Activated CD8-positive, alpha-beta T cell treated with anti-CD3 and anti-CD28 coated beads for 36 hours (primary cell): ENCODE measurements at regions of chr9 and their contacts with region 1.

Region 1: GRCh38 chr9:98074115-98074990 is 17.8 kb downstream of the NANS start:
- DNase-seq: peak; percentile 72
- ATAC-seq: peak; percentile 32
- H3K4me3 Mint-ChIP-seq: peak overlapping the region; percentile 31
- H3K27ac Mint-ChIP-seq: peak overlapping the region; percentile 89
- H3K4me1 Mint-ChIP-seq: peaks cover 32% of the 10 kb centered on the region
- H3K27me3 Mint-ChIP-seq: no peaks in the 10 kb centered on the region
- CTCF ChIP-seq: peak; percentile 99

Region 2: GRCh38 chr9:97696803-97697601 is 377.4 kb before region 1 on chr9 and contains the start of gene XPA:
- CTCF ChIA-PET with region 1: no interaction called
- POLR2A ChIA-PET with region 1: no interaction called
- intact Hi-C with region 1: no loop called
- DNase-seq: peak; percentile 97
- ATAC-seq: peak; percentile 98
- H3K4me3 Mint-ChIP-seq: peak within 1 kb of the TSS; percentile 92
- H3K27ac Mint-ChIP-seq: peak within 1 kb of the TSS; percentile 94
- H3K4me1 Mint-ChIP-seq: peaks cover 46% of the 10 kb centered on the region
- H3K27me3 Mint-ChIP-seq: peaks cover 4% of the 10 kb centered on the region
- CTCF ChIP-seq: no peak
- total RNA-seq, gene XPA: 9.8 to 10.9 TPM

Region 3: DNA sequence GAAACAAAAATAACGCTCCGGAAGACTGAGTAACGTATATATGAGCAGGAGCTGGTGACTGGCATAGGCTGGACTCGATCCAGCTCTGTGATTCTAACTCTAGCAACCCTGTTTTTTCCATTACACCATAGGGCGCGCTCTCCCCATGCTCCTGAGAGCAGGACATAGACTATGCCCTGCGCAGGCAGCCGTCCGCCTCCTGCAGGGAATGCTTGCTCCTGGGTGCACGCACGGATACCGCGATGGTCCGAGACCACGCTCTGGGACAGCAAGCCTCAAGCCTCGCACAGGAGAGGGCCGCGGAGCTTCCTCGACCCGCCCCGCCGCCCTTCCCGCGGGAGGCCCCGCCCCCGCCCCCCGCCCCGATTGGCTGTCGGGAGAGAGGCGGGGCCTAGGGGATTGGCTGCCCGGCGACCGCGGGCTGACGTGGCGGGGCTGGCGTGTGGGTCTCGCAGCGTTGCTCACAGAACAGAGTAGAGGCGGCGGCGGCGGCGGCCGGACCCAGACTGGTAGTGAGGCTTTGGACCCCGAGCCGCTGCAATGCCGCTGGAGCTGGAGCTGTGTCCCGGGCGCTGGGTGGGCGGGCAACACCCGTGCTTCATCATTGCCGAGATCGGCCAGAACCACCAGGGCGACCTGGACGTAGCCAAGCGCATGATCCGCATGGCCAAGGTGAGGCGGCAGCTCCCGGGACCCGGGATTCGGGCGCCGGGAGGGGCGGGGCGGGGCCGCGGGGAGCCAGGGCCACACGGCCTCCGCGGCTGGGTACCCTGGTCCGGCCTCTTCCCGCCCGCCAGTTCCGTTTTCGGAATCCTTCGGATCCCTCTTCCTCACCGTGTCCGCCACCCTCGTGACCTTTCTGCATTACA is 17.9 kb before region 1 on chr9 and contains the start of gene NANS:
- CTCF ChIA-PET with region 1: interaction called, 28 read pairs
- POLR2A ChIA-PET with region 1: interaction called, 15 read pairs
- intact Hi-C with region 1: no loop called
- DNase-seq: peak; percentile 96
- ATAC-seq: peak; percentile 95
- H3K4me3 Mint-ChIP-seq: peak within 1 kb of the TSS; percentile 91
- H3K27ac Mint-ChIP-seq: peak within 1 kb of the TSS; percentile 94
- H3K4me1 Mint-ChIP-seq: peaks cover 32% of the 10 kb centered on the region
- H3K27me3 Mint-ChIP-seq: no peaks in the 10 kb centered on the region
- CTCF ChIP-seq: no peak
- total RNA-seq, gene NANS: 51.2 to 51.8 TPM

Region 4: GRCh38 chr9:98087420-98088354 is 13.3 kb after region 1 on chr9:
- CTCF ChIA-PET with region 1: interaction called, 19 read pairs
- POLR2A ChIA-PET with region 1: interaction called, 5 read pairs
- intact Hi-C with region 1: no loop called
- DNase-seq: peak; percentile 27
- ATAC-seq: peak; percentile 51
- H3K4me3 Mint-ChIP-seq: no peak overlapping the region
- H3K27ac Mint-ChIP-seq: no peak overlapping the region
- H3K4me1 Mint-ChIP-seq: peaks cover 13% of the 10 kb centered on the region
- H3K27me3 Mint-ChIP-seq: no peaks in the 10 kb centered on the region
- CTCF ChIP-seq: no peak

Region 5: DNA sequence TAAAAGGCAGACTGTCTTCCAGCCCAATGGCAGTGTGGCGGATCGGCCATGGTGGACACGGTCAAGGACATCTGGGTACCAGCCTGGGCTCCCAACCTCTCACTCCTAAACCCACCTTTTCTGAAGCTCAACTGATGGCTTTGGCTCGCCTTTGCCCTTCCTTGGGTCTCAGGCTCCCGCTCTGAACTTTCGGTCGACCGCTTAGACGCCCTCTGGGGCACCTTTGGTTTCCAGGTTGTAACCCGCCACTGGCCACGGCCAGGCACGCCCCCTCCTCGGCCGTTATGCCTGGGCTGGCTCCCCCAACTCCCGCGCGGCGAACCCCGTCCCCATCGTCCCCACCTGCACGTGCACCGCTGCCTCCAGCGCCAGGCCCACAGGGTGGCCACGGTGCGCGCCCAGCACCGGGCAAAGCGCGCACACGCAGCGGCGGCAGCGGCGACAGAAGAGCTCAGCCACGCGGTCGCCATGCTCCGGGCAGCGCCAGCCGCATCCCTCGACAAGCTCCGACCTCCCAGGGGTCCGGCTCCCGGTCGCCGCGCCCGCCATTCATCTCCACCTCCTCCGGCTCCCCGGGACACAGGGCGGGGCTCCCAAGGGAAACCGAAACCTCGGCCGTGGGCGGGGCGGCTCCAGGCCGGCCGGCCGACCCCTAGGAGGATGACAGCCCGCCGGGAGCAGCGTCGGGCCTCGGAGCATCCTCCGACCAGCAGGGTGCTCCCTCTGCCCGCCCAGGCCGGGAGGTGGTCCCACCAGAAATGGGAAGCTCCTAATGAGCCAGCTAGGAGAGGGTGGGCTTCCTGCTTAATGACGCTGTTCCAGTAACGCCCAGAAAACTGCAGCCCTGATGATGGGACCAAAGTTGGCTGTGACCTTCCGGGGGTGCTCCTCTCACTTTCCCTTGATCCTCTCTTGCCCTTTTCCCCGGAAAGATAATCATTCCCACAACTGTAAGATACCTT is 44.6 kb after region 1 on chr9 and contains the start of gene TRIM14:
- CTCF ChIA-PET with region 1: interaction called, 11 read pairs
- POLR2A ChIA-PET with region 1: interaction called, 4 read pairs
- intact Hi-C with region 1: no loop called
- DNase-seq: peak; percentile 72
- ATAC-seq: peak; percentile 54
- H3K4me3 Mint-ChIP-seq: peak within 1 kb of the TSS; percentile 80
- H3K27ac Mint-ChIP-seq: peak within 1 kb of the TSS; percentile 94
- H3K4me1 Mint-ChIP-seq: peaks cover 38% of the 10 kb centered on the region
- H3K27me3 Mint-ChIP-seq: no peaks in the 10 kb centered on the region
- CTCF ChIP-seq: no peak
- total RNA-seq, gene TRIM14: 39.6 to 41.8 TPM

Region 6: GRCh38 chr9:98192503-98193335 is 118.4 kb after region 1 on chr9 and contains the start of gene CORO2A:
- CTCF ChIA-PET with region 1: interaction called, 10 read pairs
- POLR2A ChIA-PET with region 1: no interaction called
- intact Hi-C with region 1: loop called (anchors 10 kb)
- DNase-seq: peak; percentile 81
- ATAC-seq: peak; percentile 80
- H3K4me3 Mint-ChIP-seq: peak within 1 kb of the TSS; percentile 81
- H3K27ac Mint-ChIP-seq: peak within 1 kb of the TSS; percentile 49
- H3K4me1 Mint-ChIP-seq: peaks cover 32% of the 10 kb centered on the region
- H3K27me3 Mint-ChIP-seq: no peaks in the 10 kb centered on the region
- CTCF ChIP-seq: peak; percentile 25
- total RNA-seq, gene CORO2A: 12.2 to 13.4 TPM

Region 7: DNA sequence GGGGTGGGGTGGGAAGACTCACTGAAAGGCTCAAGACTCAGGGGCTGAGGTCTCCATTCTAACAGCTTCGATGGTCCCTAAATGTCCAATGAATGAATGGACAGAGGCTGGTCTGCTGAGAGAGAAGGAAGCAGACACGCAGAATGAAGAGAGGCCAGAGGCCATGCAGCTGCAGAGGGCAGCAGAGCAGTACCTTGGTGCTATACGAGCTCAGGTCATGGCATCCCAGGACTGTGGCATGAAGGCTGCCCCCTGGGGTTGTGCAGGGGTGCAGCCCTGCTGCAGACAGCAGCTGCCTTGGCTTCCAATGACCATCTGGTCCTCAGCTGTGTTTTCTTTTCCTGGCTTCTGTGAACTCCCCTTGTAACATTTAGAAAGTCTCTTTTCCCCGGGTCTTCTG is 133.3 kb after region 1 on chr9:
- CTCF ChIA-PET with region 1: interaction called, 13 read pairs
- POLR2A ChIA-PET with region 1: interaction called, 3 read pairs
- intact Hi-C with region 1: no loop called
- DNase-seq: no peak
- ATAC-seq: no peak
- H3K4me3 Mint-ChIP-seq: no peak overlapping the region
- H3K27ac Mint-ChIP-seq: no peak overlapping the region
- H3K4me1 Mint-ChIP-seq: no peaks in the 10 kb centered on the region
- H3K27me3 Mint-ChIP-seq: no peaks in the 10 kb centered on the region
- CTCF ChIP-seq: no peak

Region 8: DNA sequence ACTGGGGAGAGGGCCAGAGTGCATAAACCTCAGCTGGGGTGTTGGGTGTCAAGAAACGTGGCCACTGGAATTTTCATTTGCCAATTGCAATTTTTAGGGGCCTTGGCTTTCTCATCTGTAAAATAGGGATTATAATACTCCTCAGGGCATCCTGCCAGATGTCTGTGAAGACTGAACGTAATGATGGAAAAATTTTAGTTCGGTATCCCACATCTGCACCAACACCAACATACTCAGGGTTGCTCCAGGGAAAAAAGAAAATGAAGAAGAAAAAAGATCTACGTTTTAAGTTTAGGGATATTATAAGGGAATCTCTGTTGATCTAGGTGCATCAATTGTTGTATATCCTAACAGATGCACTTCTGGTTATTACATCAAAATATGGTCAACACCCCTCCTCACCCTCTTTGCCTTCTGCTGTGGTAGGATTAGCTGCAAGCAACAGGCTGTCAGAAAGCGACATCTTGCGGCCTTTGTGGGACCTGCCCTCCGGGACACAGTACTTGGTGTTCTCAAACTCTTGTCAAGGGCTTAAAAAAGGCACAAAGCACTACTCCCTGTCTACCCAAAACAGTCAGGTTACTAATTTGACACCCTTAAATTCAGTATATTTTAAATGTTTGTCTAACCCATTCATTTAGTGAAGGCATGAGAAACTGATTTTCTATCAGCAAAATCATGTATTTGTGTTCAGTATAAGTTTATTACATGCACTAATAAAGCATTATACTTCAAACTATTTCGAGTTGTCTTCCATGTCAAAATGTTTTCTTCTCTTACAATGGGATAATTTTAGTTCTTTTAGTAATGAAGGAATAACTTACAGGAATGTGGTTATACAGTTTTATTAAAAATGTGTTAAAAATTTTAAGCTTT is 189.4 kb after region 1 on chr9:
- CTCF ChIA-PET with region 1: interaction called, 8 read pairs
- POLR2A ChIA-PET with region 1: no interaction called
- intact Hi-C with region 1: loop called (anchors 2 kb)
- DNase-seq: peak; percentile 89
- ATAC-seq: peak; percentile 99
- H3K4me3 Mint-ChIP-seq: no peak overlapping the region
- H3K27ac Mint-ChIP-seq: no peak overlapping the region
- H3K4me1 Mint-ChIP-seq: no peaks in the 10 kb centered on the region
- H3K27me3 Mint-ChIP-seq: no peaks in the 10 kb centered on the region
- CTCF ChIP-seq: peak; percentile 82